CD4-positive, alpha-beta memory T cell (primary cell): ENCODE measurements at regions of chr19 and their contacts with region 1.

Region 1: GRCh38 chr19:8194528-8195267 is 14.5 kb upstream of the CERS4 start:
- DNase-seq: peak; percentile 50 to 75 (median 56)
- H3K4me3 ChIP-seq: no peak overlapping the region
- H3K4me3 Mint-ChIP-seq: peak overlapping the region; percentile 59 to 92 (median 84)
- H3K27ac ChIP-seq: peak overlapping the region; percentile 61
- H3K27ac Mint-ChIP-seq: peak overlapping the region; percentile 93 to 98 (median 98)
- H3K4me1 ChIP-seq: peaks cover 34% of the 10 kb centered on the region
- H3K4me1 Mint-ChIP-seq: peaks cover 22 to 54% (median 40%) of the 10 kb centered on the region in 4 donors
- H3K27me3 ChIP-seq: no peaks in the 10 kb centered on the region
- H3K27me3 Mint-ChIP-seq: no peaks in the 10 kb centered on the region

Region 2: GRCh38 chr19:8180061-8180460 is 14.6 kb before region 1 on chr19:
- CTCF ChIA-PET with region 1: interaction called, 6 read pairs
- POLR2A ChIA-PET with region 1: interaction called, 20 read pairs
- intact Hi-C with region 1: no loop called
- DNase-seq: no peak
- H3K4me3 ChIP-seq: no peak overlapping the region
- H3K4me3 Mint-ChIP-seq: no peak overlapping the region
- H3K27ac ChIP-seq: no peak overlapping the region
- H3K27ac Mint-ChIP-seq: no peak overlapping the region
- H3K4me1 ChIP-seq: peaks cover 15% of the 10 kb centered on the region
- H3K4me1 Mint-ChIP-seq: peaks cover 2 to 14% (median 8%) of the 10 kb centered on the region in 4 donors
- H3K27me3 ChIP-seq: no peaks in the 10 kb centered on the region
- H3K27me3 Mint-ChIP-seq: no peaks in the 10 kb centered on the region

Region 3: GRCh38 chr19:8208922-8209461 is 14.3 kb after region 1 on chr19 and contains the start of gene CERS4:
- CTCF ChIA-PET with region 1: interaction called, 4 read pairs
- POLR2A ChIA-PET with region 1: interaction called, 50 read pairs
- intact Hi-C with region 1: loop called (anchors 2 kb)
- DNase-seq: peak in 3 of 5 donors; percentile 76 to 78 (median 78)
- H3K4me3 ChIP-seq: peak within 1 kb of the TSS; percentile 63 to 79
- H3K4me3 Mint-ChIP-seq: peak within 1 kb of the TSS; percentile 82 to 92 (median 92)
- H3K27ac ChIP-seq: peak within 1 kb of the TSS; percentile 84
- H3K27ac Mint-ChIP-seq: peak within 1 kb of the TSS; percentile 85 to 96 (median 93)
- H3K4me1 ChIP-seq: peaks cover 19% of the 10 kb centered on the region
- H3K4me1 Mint-ChIP-seq: peaks cover 12 to 29% (median 22%) of the 10 kb centered on the region in 4 donors
- H3K27me3 ChIP-seq: no peaks in the 10 kb centered on the region
- H3K27me3 Mint-ChIP-seq: no peaks in the 10 kb centered on the region
- total RNA-seq, gene CERS4: 29.2 to 30.6 TPM